ENCODE measurements at regions of chr22 and their contacts with region 1.

Region 1: DNA sequence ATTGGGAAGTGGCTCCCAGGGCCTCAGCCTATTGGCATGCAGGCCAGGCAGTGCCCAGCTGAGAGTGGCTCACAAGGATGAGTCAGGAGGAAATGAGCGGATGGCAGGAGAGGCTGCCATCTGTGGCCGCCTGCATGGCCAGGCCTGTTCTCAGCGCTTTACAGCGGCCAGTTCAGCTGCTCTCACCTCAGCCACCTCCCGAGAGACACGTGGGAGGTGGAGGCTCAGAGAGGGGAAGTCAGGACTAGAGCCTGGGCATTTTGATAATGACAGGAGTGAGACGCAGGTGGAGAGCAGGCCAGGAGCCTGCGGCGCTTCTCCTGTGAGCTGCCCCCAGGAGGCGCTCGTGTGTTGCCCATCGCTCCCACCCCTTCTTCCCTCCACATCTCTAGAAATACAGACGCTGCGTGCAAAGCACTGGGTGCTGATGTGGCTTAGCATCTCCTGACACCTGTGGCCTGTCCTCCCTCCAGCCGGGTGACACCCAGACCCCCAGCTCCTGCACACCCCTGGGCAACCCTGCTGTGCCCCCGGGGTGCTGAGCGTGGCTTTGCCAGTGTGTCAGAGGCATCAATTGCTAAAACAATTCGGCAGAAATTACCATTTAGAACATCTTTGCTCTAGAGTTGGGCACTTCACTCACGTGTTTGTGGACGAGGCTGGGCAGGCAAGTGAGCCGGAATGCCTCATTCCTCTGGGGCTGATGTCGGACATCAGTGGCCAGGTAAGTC is 21.4 kb upstream of the PANX2 start:
- DNase-seq: peak in 3 of 4 donors; percentile 54 to 92 (median 68)
- ATAC-seq: peak; percentile 92
- H3K4me3 ChIP-seq: no peak overlapping the region
- H3K27ac ChIP-seq: no peak overlapping the region
- H3K4me1 ChIP-seq: peaks cover 4 to 29% of the 10 kb centered on the region in 2 donors
- H3K27me3 ChIP-seq: peaks cover 0 to 16% of the 10 kb centered on the region in 2 donors
- CTCF ChIP-seq: peak; percentile 56 to 93

Region 2: GRCh38 chr22:50209893-50210292 is 60.7 kb after region 1 on chr22:
- intact Hi-C with region 1: loop called in 1 of 2 experiments (anchors 2 kb)
- DNase-seq: peak in 2 of 4 donors; percentile 75 to 80
- ATAC-seq: peak; percentile 60
- H3K4me3 ChIP-seq: no peak overlapping the region
- H3K27ac ChIP-seq: no peak overlapping the region
- H3K4me1 ChIP-seq: peaks cover 0 to 34% of the 10 kb centered on the region in 2 donors
- H3K27me3 ChIP-seq: no peaks in the 10 kb centered on the region
- CTCF ChIP-seq: peak; percentile 79 to 89